ENCODE measurements at regions of chr20 and their contacts with region 1.

Region 1: GRCh38 chr20:24781422-24781980 is 167.6 kb upstream of the CST7 start:
- DNase-seq: peak; percentile 48 to 88 (median 72)

Region 2: DNA sequence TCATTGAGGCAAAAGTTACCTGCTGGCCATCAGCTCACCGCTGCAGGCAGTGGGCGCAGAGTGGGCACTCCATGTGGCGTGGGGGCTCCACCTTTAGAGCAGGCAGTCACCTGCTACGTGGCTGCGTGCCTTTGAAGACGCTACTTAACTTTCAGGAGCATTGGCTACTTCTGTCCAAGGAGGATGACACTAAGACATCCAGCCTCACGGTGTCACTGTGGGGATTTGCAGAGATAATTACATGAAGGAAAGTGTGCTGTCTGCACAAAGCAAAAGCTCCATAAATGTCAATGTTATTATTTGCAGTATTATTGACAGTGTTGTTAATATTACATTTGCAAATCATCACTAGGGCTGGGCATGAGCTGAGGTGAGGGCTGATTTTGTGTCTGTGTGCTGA is 478.1 kb before region 1 on chr20:
- intact Hi-C with region 1: loop called (anchors 5 kb)
- DNase-seq: peak in 34 of 42 donors; percentile 18 to 78 (median 54)

Region 3: GRCh38 chr20:24469116-24469893 is 312.2 kb before region 1 on chr20 and contains the start of gene SYNDIG1:
- intact Hi-C with region 1: loop called (anchors 5 kb)
- DNase-seq: peak; percentile 60 to 92 (median 81)

Region 4: DNA sequence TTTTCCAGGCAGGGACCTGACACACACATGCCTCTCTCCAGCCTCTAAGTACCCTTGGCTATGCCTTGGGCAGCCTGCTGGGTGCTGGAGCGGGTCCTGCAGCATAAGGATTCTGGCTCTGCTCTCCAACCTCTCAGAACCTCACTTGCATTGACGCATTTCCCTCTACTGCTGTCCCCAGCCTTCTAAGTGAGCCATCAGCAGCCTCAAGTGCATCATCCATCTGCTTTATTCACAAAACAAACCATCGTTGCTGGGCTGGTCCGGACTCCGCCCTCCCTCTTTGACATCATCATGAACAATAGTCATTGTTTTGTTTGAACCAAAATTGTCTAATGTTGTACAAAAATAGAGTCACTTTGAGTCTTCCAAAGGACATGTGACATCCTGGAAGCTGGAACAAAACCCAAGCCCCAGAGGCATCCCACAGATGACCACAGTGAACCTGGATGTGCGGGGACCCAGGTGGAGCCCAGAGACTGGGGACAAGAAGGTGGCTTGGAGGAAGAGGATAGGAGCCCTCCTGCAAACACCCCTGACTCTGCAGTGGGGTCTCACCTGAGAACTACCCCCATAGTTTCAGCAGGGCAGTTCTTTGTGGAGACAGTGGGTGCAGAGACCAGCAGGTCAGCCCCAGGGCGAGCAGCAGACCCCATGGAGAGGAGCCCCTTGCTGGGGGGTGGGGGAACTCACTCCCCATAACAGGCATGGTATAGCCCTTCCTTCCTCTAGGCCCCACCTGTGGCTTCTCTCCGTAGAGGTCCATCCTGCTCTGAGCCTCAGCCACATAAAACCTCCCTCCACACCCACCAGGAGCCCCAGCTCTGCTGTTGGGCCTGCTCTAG is 82.0 kb before region 1 on chr20:
- intact Hi-C with region 1: no loop called
- DNase-seq: peak in 32 of 42 donors; percentile 8 to 82 (median 52)

Measured in head of caudate nucleus (tissue), 42 donors.